Dendritic cell treated with granulocyte-macrophage colony-stimulating factor and Interleukin-4, amounts not matched to agents 40 ng/mL and 50 ng/mL, for 4 days (primary cell): ENCODE measurements at regions of chr22 and their contacts with region 1.

Region 1: DNA sequence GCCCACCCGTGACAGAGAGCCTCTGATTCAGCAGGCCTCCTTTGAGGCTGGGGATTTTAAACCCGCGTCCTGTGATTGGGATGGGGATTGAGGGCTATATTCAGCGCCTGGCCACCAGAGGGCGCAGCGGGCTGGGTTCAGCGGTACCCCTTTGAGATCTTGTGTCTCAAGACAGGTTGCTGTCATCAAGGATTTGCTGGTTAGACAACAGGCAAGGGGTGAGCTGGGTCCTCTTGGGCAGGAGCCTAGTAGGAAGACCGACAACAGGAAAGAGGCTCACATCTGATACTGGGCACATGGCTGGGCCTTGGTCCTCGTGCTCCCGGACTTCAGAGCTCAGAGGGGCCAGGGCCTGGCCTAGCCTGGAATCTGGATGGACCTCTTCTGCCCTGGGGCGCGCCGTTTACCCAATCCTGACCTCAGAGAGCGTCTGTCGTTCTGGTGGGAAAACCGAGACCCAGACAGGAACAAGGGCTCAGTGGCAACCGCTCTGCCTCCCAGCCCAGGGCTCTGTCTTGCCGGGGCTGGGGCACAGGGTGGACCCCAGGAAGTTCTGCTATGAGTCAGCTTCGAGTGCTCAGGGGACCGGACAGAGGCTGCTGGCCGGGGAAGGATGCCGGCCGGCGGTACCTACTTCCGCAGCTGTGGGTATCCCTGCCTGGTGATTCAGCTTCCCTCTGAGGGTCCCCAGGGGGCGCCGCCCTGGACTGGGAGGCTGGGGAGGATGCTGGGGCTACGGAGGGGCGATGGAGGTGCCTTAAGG is 929 bp upstream of the SLC35E4 start:
- H3K4me3 Mint-ChIP-seq: peak overlapping the region; percentile 75
- H3K27ac Mint-ChIP-seq: peak overlapping the region; percentile 67
- H3K4me1 Mint-ChIP-seq: peaks cover 41% of the 10 kb centered on the region
- H3K27me3 Mint-ChIP-seq: peaks cover 2% of the 10 kb centered on the region

Region 2: GRCh38 chr22:30511109-30511508 is 123.5 kb before region 1 on chr22:
- intact Hi-C with region 1: no loop called
- H3K4me3 Mint-ChIP-seq: no peak overlapping the region
- H3K27ac Mint-ChIP-seq: no peak overlapping the region
- H3K4me1 Mint-ChIP-seq: no peaks in the 10 kb centered on the region
- H3K27me3 Mint-ChIP-seq: peaks cover 21% of the 10 kb centered on the region

Region 3: DNA sequence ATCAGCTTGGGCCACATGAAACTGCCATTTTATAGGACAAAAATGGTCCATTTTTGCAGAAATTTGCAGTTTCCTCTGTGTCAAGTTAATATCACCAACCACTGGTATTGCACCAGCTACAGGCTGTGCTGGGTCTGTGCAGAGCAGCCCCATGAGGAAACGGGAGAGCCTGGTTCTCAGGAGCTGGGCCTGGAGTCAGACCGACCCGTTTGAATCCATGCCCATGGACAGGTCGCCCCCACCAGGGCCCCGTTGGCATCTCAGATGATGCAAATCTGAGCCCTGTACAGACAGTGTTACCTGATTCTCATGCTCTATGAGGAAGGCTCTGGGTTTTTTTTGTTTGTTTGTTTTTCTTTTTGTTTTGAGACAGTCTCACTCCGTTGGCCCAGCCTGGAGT is 78.3 kb before region 1 on chr22:
- intact Hi-C with region 1: no loop called
- H3K4me3 Mint-ChIP-seq: no peak overlapping the region
- H3K27ac Mint-ChIP-seq: no peak overlapping the region
- H3K4me1 Mint-ChIP-seq: no peaks in the 10 kb centered on the region
- H3K27me3 Mint-ChIP-seq: no peaks in the 10 kb centered on the region

Region 4: DNA sequence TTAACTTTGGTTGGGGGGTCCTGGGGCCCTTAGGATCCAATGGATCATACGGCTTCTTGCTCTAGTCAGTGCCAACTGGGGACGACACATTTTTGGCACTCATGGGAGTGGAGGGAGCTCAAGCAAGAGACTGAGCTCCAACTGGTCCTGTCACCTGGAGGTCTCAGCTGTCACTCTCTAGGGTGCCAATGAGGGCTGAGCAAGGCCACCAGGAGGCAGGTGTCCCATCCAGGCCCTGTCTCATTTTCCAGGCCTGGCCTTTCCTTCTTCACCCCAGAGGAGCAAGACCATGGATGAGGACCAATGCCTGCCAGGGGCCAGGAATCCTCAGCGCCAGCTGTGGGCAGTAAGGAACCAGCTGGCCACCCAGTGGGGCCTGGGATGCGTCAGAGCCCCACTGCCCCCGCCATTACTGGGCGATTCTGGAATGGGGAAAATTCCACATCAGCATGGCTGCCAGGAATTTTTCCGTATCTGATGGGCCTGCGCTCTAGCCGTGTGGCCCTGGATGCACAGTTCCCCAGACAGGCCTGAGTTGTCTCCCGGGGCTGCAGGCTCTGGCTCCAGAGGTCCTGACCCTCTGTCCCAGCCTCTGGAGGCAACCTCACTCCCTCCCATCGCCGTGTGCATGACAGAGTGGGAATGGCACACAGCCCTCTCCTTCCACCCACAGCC is 59.5 kb before region 1 on chr22:
- intact Hi-C with region 1: no loop called
- H3K4me3 Mint-ChIP-seq: no peak overlapping the region
- H3K27ac Mint-ChIP-seq: no peak overlapping the region
- H3K4me1 Mint-ChIP-seq: no peaks in the 10 kb centered on the region
- H3K27me3 Mint-ChIP-seq: peaks cover 19% of the 10 kb centered on the region

Region 5: DNA sequence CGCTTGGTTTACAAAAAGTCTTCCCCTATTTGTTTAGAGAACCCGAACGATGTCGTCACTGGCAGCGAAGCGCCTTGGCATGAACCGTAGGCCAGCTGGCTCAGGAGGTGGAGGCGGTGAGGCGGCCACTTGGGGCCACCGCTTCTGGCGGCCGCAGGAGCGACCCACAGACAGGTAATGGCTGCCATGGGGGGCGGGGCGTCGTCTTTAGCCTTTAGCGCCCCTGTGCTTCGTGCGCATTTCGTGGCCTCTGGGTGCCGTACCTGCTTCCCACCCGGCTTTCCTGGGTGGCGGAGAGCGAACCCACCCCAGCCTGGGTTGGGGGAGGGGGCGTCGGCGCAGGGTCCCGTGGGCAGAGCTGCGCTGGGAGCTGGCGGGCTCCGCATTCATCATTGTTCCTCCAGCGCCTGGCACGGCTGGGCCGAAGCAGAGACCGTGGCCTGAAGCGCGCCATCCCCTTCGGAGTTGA is 59.6 kb after region 1 on chr22:
- intact Hi-C with region 1: loop called (anchors 10 kb)
- H3K4me3 Mint-ChIP-seq: peak overlapping the region; percentile 72
- H3K27ac Mint-ChIP-seq: peak overlapping the region; percentile 25
- H3K4me1 Mint-ChIP-seq: no peaks in the 10 kb centered on the region
- H3K27me3 Mint-ChIP-seq: peaks cover 69% of the 10 kb centered on the region

Region 6: DNA sequence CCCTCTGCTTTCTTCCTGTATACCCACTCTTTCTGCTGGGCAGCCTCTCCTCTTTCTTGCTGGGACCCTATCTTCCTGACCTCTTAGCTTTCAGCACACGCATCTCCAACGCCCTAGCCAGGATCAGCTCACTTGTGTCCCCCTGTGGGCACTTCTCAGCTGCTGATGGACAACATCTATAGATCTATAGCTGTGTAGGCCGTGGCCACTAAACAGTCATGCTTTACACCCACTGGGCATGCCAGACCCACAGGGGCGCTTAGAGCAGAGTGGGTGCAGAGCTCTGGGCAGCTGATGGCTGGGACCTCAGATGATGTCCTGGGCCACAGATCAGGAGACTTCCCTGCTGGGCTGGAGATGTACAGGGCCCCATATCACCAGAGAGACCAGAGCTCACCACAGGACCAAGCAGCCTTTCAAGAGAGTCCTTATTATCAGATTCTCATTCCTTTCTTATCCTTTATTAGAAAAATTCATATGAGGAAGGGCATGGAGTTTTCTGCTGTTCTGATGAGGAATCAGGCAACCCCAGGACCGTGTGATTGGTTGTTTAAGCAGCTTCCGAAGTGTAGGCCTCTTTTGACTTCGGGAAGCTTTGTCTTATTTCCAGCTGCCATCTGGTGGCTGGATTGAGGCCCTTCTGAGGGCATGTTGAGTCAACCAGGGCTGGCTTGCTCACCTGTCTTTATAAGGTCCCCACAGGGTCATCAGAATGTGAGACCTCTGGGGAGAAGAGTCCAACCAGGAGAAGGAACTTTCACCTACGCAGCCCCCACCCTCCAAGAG is 120.5 kb after region 1 on chr22:
- intact Hi-C with region 1: loop called (anchors 1 kb)
- H3K4me3 Mint-ChIP-seq: no peak overlapping the region
- H3K27ac Mint-ChIP-seq: no peak overlapping the region
- H3K4me1 Mint-ChIP-seq: no peaks in the 10 kb centered on the region
- H3K27me3 Mint-ChIP-seq: peaks cover 3% of the 10 kb centered on the region

Region 7: DNA sequence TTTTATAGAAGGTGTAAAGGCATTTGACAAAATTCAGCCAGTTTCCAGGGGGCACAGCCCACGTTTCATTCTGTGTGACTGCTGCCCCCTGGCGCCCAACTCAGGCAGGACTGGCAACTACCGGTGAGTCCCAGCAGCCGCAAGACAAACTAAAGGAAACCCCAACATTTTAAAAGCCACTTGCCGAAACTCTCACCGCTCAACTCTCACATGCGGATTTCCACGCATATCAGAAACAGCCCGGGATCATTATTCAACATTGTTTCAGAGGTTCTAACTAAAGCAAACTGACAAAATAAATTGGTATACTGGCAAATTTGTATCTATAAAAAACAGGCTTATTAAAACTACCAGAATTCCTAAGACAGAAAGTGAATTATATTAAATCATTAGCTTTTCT is 285.8 kb after region 1 on chr22:
- intact Hi-C with region 1: loop called (anchors 10 kb)
- H3K4me3 Mint-ChIP-seq: peak overlapping the region; percentile 48
- H3K27ac Mint-ChIP-seq: no peak overlapping the region
- H3K4me1 Mint-ChIP-seq: no peaks in the 10 kb centered on the region
- H3K27me3 Mint-ChIP-seq: peaks cover 9% of the 10 kb centered on the region

Region 8: DNA sequence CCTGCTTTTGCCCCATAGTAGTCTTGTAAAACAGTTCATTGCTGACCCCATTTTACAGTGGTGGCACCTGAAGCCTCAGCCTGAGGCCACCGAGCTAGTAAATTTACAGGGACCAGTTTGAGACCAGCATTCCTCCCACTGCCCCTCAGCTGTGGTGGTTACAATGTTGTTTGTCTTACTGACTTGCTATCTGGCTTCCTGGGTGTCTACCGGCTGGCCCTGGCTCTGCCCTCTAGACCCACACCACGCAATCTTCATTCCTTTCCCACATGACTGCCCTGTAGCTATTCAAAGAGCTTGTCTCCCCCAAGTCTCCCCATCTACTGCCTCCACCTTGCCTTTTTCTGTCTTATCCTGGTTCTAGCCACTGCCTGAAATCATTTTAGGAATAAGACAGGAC is 636.8 kb after region 1 on chr22:
- intact Hi-C with region 1: no loop called
- H3K4me3 Mint-ChIP-seq: no peak overlapping the region
- H3K27ac Mint-ChIP-seq: no peak overlapping the region
- H3K4me1 Mint-ChIP-seq: no peaks in the 10 kb centered on the region
- H3K27me3 Mint-ChIP-seq: no peaks in the 10 kb centered on the region